ENCODE measurements at regions of chr2 and their contacts with region 1.

Region 1: GRCh38 chr2:65264821-65265670 is 37.4 kb downstream of the ACTR2 start:
- DNase-seq: no peak
- ATAC-seq: peak; percentile 78 to 79
- H3K4me3 ChIP-seq: no peak overlapping the region
- H3K27ac ChIP-seq: no peak overlapping the region
- H3K4me1 ChIP-seq: no peaks in the 10 kb centered on the region
- H3K27me3 ChIP-seq: no peaks in the 10 kb centered on the region

Region 2: DNA sequence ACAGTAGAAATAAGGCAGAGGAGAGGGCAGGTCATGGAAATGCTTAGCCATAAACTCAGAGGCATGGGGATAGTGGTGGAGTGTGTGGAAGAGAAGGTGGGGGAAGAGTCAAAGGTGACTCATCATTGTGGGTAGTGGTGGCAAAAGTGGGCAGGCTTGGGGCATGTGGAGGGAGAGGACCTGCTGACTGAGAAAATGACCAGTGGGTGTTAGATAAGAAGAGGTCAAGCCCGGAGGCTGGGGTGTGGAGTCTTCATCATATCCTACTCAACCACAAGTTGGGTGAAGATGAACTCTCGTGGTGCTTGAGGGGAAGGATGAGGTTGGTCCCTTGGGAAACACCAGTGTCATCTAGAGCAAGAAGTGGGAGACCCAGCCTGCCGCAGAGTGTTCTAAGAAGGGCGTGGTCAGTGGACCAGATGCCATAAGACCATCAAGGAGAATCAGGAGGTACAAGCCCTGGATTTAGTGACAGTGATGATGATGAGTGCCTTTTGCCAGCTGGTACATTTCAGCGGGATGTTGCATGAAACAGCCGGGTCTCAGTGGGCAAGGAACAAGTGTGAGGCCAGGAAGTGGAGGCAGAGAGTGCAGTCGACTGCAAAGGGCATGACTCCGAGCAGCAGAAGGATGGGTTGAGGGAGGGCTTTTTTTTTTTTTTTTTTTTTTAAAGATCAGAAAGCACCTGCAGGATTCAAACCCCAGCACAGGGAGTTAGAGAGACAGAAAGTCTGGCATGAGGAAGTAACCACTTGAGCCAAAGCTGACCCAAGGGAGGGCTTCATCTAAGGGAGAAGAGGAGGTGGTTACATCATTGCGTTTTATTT is 289.9 kb after region 1 on chr2:
- intact Hi-C with region 1: loop called (anchors 5 kb)
- DNase-seq: no peak
- ATAC-seq: no peak
- H3K4me3 ChIP-seq: no peak overlapping the region
- H3K27ac ChIP-seq: no peak overlapping the region
- H3K4me1 ChIP-seq: no peaks in the 10 kb centered on the region
- H3K27me3 ChIP-seq: no peaks in the 10 kb centered on the region

Region 3: GRCh38 chr2:65574993-65575392 is 309.9 kb after region 1 on chr2:
- intact Hi-C with region 1: loop called in 2 of 4 experiments (anchors 5 kb)
- DNase-seq: no peak
- ATAC-seq: peak in 1 of 2 donors; percentile 41
- H3K4me3 ChIP-seq: no peak overlapping the region
- H3K27ac ChIP-seq: no peak overlapping the region
- H3K4me1 ChIP-seq: no peaks in the 10 kb centered on the region
- H3K27me3 ChIP-seq: no peaks in the 10 kb centered on the region